A549 (cell line): ENCODE measurements at regions of chr21 and their contacts with region 1.

Region 1: DNA sequence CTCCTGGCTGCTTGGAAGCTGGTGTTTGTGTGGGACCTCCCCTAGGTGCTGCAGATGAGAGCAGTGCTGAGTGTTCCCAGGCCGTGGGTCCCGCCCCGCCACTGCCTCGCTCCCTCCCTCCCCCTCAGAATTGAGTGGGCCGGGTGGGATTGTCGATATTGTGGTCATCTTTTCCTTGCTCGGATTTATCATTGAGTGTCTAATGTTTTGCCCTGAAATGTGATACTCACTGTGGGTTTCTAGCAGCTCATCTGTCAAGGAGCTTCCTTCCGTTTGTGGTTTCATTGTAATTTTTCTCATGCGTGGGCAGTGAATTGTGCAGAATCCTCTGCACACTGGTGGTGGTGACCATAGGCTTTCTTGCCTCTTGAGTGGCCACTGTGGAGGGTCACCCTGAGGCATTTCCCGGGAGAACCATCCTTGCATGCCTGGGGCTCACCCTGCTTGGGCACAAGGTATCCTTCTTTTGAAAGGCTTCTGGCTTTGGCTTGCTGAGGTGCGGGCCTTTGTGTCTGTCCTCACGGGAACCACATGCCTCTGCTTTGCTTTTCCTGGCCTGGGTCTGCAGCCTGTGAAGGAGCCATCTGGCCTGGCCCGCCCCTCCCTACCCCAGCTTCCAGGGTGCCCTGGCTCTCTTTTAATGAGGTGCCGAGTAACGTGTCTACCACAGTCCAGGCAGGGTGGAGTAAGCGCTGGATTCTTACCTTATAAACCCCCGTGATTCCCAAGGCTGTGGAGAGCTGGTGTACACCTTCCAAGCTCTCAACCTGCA is 25.6 kb downstream of the SLX9 start:
- DNase-seq: no peak
- ATAC-seq: no peak
- H3K4me3 ChIP-seq: no peak overlapping the region
- H3K27ac ChIP-seq: no peak overlapping the region
- H3K4me1 ChIP-seq: peaks cover 17% of the 10 kb centered on the region
- CTCF ChIP-seq: no peak
- EP300 ChIP-seq: no peak
- POLR2A ChIP-seq: no peak
- RAD21 ChIP-seq: no peak

Region 2: GRCh38 chr21:44461464-44462001 is 503.9 kb before region 1 on chr21:
- CTCF ChIA-PET with region 1: no interaction called
- POLR2A ChIA-PET with region 1: no interaction called
- DNase-seq: no peak
- ATAC-seq: peak in 1 of 2 experiments; percentile 72; a peak in 3 of 6 replicates
- H3K4me3 ChIP-seq: no peak overlapping the region
- H3K27ac ChIP-seq: no peak overlapping the region
- H3K4me1 ChIP-seq: no peaks in the 10 kb centered on the region
- CTCF ChIP-seq: no peak
- EP300 ChIP-seq: no peak
- POLR2A ChIP-seq: no peak
- RAD21 ChIP-seq: no peak

Region 3: GRCh38 chr21:44949779-44950198 is 15.6 kb before region 1 on chr21:
- CTCF ChIA-PET with region 1: interaction called, 47 read pairs
- POLR2A ChIA-PET with region 1: no interaction called
- DNase-seq: peak; percentile 65 to 70
- ATAC-seq: peak; percentile 67 to 93
- H3K4me3 ChIP-seq: no peak overlapping the region
- H3K27ac ChIP-seq: peak overlapping the region in 1 of 2 experiments; percentile 88; a peak in 3 of 6 replicates
- H3K4me1 ChIP-seq: peaks cover 36% of the 10 kb centered on the region
- CTCF ChIP-seq: peak; percentile 67
- EP300 ChIP-seq: no peak
- POLR2A ChIP-seq: no peak
- RAD21 ChIP-seq: peak; percentile 76

Region 4: DNA sequence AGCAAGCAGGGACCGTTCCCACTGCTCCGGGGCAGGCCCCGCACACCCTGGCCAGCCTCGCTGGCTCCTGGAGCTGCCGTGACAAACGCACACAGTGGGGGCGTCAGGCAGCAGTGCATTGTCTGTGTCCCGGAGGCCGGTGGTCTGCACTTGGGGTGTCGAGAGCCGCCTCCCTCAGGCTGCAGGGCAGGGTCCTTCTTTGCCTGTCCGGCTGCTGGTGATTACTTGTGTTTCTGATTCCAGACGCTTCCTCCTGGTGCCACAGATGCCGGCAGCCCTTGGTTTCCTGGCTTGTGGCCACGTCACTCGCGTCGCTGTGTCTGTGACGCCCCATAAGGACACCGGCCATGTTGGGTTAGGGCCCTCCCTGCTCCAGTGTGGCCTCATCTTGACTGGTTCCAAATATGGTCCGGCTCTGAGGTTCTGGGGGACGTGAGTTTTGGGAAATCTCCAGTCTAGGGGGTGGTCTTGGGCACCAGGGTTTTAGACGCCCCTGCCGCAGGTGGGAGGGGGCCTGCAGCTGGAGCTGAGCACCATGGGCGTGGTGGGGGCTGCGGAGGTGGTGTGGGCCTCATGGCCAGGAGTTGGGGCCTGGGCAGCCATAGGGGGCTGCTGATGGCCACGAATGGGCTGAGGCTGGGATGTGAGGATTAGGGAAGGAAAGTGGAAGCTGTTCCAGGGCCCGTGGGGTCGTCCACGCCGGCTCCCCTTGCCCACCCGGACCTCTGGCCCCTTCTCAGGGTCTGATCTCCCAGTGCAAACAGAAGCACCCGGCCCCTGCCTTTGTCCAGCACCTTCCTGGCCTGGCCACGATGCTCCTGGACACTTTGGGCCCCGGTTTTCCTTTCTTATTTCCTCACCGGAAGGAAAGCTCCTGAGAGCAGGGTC is 15.4 kb after region 1 on chr21:
- CTCF ChIA-PET with region 1: no interaction called
- POLR2A ChIA-PET with region 1: no interaction called
- DNase-seq: no peak
- ATAC-seq: no peak
- H3K4me3 ChIP-seq: no peak overlapping the region
- H3K27ac ChIP-seq: peak overlapping the region in 1 of 2 experiments; percentile 28; a peak in 1 of 6 replicates
- H3K4me1 ChIP-seq: peaks cover 8% of the 10 kb centered on the region; the same call in 2 of the 3 replicates
- CTCF ChIP-seq: no peak
- EP300 ChIP-seq: no peak
- POLR2A ChIP-seq: no peak
- RAD21 ChIP-seq: no peak